Posterior vena cava (tissue), 2 donors: ENCODE measurements at regions of chr19 and their contacts with region 1.

Region 1: DNA sequence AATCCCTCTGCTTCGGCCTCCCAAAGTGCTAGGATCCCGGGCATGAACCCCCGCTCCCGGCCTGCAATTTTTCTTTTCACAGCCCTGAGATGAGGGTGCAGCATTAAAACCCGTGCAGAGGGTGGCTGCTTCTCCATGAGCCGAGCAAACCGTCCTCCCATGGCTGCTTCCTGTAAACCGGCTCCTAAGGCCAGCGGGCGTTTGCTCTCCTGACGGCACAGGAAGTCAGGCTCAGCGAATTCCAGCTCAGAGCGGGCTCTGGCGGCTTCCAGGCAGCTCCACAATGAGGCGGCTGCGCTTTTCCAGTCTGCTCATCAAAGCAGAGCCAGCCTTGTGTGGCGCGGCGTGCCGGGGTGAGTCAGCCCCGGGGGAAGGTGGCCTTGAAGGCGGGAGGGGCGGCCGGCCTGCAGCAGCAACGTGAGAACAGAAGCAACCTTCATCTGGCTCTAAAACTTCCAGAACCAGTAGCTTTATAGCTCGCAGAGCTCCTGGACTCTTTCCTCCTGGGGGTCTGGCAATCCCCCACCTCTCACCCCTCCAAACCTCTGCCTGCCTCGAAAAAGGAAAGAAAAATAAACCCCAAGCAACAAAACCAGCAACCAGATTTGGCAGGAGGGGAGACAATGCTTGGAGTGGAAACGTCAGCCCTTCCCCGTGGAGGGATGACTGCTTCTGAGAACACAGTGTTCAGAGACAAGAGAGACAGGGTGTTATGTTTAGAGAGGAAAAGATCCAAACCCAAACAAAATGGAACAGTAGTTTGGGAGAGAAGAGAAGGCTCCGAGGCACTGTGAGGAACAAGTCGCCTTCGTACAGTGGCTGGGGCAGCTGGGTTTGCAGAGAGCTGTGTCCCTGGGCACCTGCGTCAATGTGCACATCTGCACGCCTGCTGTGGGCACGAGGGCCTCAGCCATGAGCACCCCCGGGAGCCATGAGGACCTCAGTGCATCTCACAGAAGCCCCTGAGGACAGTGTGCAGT is 67.8 kb downstream of the GADD45B start:
- DNase-seq: peak; percentile 99

Region 2: DNA sequence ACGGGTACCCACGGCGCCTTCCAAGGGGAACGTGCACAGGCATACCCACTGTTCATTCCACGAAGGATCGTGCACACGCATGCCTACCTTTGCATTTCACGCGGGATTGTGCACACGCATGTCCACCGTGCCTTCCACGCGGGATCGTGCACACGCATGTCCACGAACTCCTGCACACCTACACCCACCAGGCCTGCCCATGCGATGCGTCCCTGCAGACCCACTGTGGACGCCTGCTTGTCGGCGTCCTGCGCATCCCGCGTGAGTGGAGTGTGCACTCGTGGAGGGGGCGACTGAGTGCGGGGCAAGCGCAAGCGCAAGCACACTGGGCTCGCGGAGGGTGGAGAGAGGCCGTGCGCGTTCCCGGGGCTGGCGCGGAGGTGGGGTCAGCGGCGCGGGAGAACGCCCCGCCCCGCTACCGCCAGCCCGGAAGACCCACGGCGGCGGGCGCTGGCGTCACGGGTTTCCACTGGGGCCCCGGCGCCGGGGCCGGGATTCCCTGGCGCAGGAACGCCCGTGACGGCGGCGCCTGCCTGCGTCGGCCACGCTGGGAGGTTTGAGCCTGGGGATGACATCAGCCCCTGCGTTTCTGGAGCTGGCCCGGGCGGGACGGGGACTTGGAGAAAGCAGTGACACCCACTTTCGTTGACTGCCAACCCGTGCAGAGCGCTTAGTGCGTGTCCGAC is 49.2 kb before region 1 on chr19:
- intact Hi-C with region 1: loop called (anchors 2 to 5 kb)
- DNase-seq: peak; percentile 96

Region 3: GRCh38 chr19:2578901-2579677 is 35.3 kb after region 1 on chr19:
- intact Hi-C with region 1: loop called in 1 of 2 experiments (anchors 5 kb)
- DNase-seq: peak; percentile 96

Region 4: DNA sequence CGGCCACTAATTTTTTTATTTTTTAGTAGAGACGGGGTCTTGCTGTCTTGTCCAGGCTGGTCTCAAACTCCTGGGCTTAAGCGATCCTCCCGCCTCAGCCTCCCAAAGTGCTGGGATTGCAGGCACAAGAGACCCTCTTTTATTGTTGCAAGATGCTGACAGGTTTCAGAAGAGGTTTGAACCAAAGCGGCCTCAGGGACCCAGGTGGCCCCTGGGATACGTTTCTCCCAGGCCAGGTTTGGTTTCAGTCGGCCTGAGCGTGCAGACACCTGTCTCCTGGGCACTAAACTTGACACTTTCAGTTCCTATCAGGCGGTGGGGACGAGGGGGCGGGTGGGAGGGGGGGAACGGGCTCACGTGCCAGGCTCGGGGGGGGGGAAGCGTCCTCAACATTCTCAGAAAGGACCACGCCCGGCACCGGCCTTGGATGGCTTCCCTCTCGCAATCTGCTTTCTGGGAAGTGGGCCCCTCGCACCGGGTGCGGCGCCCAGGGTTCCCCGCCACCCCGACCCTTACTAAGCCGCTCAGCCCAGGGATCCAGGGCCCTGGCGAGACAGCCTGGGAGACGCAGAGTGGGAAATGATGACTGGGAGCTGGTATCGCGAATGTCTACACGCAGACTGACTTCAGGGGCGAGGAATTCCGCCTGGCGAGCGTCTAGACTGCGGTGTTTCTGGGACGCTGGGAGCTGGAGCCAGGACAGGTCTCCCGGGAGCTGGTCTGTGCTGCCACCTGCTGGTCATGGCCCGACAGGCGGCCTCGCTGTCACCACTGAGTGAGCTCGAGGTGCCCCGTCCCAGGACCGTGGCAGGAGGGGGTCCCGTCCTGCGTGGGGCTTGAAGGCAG is 67.1 kb after region 1 on chr19:
- intact Hi-C with region 1: loop called in 1 of 2 experiments (anchors 5 kb)
- DNase-seq: peak; percentile 97